Activated CD4-positive, alpha-beta T cell treated with anti-CD3 and anti-CD28 coated beads, Interleukin-2, amount 10 ng/mL, durations not matched to agents 24 days and 14 days (primary cell): ENCODE measurements at regions of chr2 and their contacts with region 1.

Region 1: DNA sequence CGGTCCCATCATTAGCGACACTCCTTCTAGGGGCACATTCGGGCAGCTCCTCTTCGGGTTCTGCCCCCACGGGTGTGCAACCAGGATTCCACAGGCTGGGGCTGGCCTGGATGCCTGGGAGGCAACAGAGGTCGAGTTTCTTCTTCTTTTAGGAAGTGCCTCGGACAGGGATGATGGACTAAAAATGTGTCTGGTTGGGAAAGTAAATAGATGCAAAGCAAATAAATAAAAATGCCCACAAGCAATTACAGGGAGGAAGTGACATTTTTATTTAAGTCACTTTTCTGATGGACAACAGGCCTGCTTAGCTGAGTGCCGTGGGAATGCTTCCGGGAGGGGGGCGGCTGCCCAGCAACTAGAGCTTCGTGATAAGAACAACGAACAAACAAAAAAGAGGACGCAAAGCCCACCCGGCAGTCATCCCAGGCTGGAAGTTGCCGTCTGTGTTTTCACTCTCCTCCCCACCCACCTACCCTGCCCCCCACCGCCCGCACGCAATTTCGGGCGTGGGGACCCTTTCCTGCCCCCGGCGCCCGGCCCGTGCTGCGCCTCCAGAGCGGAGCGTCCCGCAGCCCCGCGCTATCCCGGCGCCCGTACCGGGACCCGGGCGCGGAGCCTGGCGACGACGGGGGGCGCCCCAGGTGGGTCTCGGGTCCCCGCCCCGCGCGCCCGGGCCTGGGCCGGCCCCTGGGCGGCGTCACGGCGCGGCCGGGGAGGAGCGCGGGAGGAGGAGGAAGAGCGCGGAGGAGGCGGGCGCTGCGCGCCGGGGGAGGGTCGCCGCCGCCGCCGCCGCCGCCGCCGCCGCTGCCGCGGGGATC is 412 bp upstream of the NCK2 start:
- DNase-seq: peak; percentile 93
- H3K4me3 Mint-ChIP-seq: peak overlapping the region; percentile 83
- H3K27ac Mint-ChIP-seq: peak overlapping the region; percentile 90
- H3K4me1 Mint-ChIP-seq: peaks cover 65% of the 10 kb centered on the region
- H3K27me3 Mint-ChIP-seq: no peaks in the 10 kb centered on the region

Region 2: DNA sequence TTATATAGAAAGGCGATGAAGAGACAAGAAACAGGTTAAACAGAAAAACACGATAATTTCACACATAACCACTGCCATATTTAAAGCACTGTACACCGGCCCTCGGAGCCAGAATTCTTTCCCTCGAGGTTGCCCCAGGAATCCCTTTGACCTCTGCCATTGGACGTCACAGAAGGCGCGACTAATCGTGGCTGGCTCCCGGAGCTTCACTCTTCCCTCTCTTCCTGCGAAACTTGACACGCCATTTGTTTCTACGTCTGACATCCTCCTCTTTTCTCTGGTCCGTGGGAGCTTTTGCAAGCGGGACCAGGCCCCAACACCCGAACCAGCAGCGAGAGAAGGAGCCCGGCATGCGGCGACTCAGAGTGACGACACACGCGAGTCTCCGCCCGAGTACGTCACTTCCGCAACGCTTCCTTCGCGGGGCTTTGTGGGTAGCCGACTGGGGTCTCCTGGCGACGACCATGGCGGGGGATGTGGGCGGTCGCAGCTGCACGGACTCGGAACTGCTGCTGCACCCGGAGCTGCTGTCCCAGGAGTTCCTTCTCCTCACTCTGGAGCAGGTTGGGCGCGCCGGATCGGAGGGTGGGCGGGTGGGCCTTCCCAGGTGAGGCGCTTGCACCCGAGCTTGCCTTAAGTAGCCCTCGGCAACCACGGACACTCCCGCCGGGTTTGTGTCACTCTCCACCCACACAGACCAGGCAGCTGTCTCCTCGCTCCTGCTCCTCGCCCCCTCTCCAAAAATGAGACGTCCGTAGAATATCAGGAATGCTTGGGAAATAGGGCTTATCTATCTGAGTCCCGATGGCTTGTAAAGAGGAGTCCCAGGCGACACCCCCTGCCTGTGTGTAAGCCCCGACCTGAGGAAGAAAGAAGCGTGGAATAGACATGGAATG is 406.9 kb before region 1 on chr2 and contains the start of gene C2orf49:
- intact Hi-C with region 1: loop called (anchors 10 kb)
- DNase-seq: peak; percentile 97
- H3K4me3 Mint-ChIP-seq: peak within 1 kb of the TSS; percentile 92
- H3K27ac Mint-ChIP-seq: peak within 1 kb of the TSS; percentile 100
- H3K4me1 Mint-ChIP-seq: peaks cover 22% of the 10 kb centered on the region
- H3K27me3 Mint-ChIP-seq: no peaks in the 10 kb centered on the region
- total RNA-seq, gene C2orf49: 20.8 and 25.5 TPM in 2 replicates

Region 3: DNA sequence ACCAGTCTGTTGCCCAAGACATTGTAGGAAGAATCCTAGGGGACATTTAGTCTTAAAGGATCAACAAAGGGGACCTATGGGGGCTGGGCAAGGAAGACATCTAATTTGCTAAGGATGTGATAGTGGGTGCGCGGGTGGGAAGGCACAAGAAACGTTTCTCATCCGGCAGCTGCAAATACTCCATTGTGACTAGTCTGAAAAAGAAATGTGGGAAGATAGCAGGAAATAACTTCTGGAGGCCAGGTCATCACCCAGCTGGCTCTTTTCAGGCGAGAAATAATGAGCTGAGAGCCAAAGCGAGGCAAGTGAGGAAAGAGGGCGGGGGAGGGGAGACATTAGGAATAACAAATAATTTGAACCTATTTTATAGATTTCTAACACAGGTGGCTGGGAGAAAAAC is 69.9 kb before region 1 on chr2:
- intact Hi-C with region 1: loop called (anchors 2 kb)
- DNase-seq: peak; percentile 36
- H3K4me3 Mint-ChIP-seq: no peak overlapping the region
- H3K27ac Mint-ChIP-seq: peak overlapping the region; percentile 35
- H3K4me1 Mint-ChIP-seq: peaks cover 13% of the 10 kb centered on the region
- H3K27me3 Mint-ChIP-seq: no peaks in the 10 kb centered on the region

Region 4: DNA sequence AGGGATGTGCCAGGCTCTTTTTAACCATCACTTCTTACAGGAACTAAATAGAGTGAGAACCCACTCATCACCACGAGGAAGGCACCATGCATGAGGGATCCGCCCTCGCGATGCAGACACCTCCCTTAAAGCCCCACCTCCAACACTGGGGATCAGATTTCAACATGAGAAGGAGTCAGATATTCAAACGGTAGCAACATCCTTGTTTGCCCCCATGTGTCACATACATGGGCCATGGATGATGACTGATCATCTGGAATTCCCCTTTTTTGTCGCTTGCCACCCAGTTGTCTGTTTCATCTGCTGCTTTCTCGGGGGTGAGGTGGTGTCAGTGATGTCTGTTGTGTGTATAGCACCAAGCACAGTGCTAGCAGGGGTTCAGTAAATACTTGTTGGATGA is 58.3 kb after region 1 on chr2:
- intact Hi-C with region 1: loop called (anchors 1 kb)
- DNase-seq: peak; percentile 90
- H3K4me3 Mint-ChIP-seq: peak overlapping the region; percentile 68
- H3K27ac Mint-ChIP-seq: peak overlapping the region; percentile 93
- H3K4me1 Mint-ChIP-seq: peaks cover 81% of the 10 kb centered on the region
- H3K27me3 Mint-ChIP-seq: no peaks in the 10 kb centered on the region

Region 5: DNA sequence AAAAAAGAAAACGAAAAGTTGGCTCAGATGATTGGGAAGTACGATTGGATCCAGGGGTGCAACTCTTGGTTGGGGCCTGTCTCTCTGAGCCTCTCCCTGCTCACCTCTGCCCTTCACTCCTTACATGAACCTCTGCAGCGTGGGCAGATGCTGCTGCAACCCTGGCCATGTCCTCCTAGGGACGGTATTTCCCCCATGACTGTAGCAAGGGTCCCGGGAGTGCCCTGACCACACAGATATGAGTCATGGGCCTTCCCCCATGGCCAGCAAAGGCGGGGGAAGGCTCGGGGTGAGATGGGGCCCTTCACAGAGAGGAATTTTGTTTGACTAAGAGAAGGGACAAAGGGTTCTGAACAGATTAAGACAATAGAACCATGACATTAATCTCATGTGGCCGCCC is 129.4 kb after region 1 on chr2:
- intact Hi-C with region 1: loop called (anchors 5 kb)
- DNase-seq: peak; percentile 78
- H3K4me3 Mint-ChIP-seq: peak overlapping the region; percentile 59
- H3K27ac Mint-ChIP-seq: peak overlapping the region; percentile 84
- H3K4me1 Mint-ChIP-seq: peaks cover 74% of the 10 kb centered on the region
- H3K27me3 Mint-ChIP-seq: no peaks in the 10 kb centered on the region

Region 6: GRCh38 chr2:106098081-106098480 is 353.8 kb after region 1 on chr2:
- intact Hi-C with region 1: loop called (anchors 5 kb)
- DNase-seq: peak; percentile 75
- H3K4me3 Mint-ChIP-seq: no peak overlapping the region
- H3K27ac Mint-ChIP-seq: no peak overlapping the region
- H3K4me1 Mint-ChIP-seq: peaks cover 27% of the 10 kb centered on the region
- H3K27me3 Mint-ChIP-seq: no peaks in the 10 kb centered on the region